Endothelial cell of umbilical vein (primary cell): ENCODE measurements at regions of chr6 and their contacts with region 1.

Region 1: GRCh38 chr6:20401205-20402091 is at the start of gene E2F3:
- DNase-seq: peak; percentile 100
- H3K4me3 ChIP-seq: peak within 1 kb of the TSS; percentile 69 to 78 (median 72)
- H3K27ac ChIP-seq: peak within 1 kb of the TSS; percentile 56
- H3K4me1 ChIP-seq: peaks cover 7% of the 10 kb centered on the region
- H3K27me3 ChIP-seq: no peaks in the 10 kb centered on the region
- CTCF ChIP-seq: no peak
- POLR2A ChIP-seq: peak; percentile 52
- total RNA-seq, gene E2F3: 21.2 and 22.0 TPM in 2 replicates

Region 2: DNA sequence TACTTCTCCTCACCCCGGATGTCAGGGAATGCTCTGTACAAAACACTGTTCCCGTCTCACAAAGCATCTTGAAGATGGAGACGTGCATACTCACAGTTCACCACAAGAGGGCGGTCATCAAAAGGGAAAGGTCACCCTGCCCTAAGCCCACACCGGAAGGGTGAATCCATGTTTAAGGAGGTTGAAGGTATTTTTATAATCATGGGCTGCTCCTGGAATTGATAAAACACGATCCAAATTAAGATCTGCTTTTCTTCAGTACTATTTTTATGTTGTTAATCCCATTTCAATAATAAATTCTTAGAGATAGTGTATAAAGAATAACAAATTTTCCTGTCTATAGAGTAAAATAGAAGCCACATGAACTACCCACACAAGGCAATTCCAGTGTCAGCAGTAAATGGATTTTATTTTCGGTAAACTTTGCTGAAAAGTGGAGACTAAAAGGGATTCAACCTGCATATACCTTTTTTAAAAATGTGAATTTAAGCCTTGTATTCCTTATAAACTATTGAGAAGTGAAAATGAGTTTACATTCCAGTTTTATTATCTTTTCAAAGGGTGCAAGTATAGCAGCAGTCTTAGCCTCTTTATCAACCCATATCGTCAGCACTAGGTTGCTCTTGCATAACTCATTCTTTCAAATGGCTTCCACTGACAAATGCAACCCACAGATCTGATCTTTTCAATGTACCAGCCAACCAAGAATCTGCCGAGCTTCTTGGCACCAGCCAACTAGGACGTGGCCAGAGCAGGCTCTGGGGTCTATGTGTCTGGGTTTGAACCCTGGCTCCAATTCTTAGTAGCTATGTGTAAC is 109.5 kb before region 1 on chr6:
- CTCF ChIA-PET with region 1: interaction called, 16 read pairs
- POLR2A ChIA-PET with region 1: no interaction called
- dilution Hi-C with region 1: no loop called
- intact Hi-C with region 1: loop called (anchors 1 kb)
- DNase-seq: peak; percentile 78
- H3K4me3 ChIP-seq: no peak overlapping the region
- H3K27ac ChIP-seq: no peak overlapping the region
- H3K4me1 ChIP-seq: no peaks in the 10 kb centered on the region
- H3K27me3 ChIP-seq: peaks cover under 1 to 2% of the 10 kb centered on the region in 2 experiments
- CTCF ChIP-seq: peak; percentile 79 to 82
- POLR2A ChIP-seq: no peak

Region 3: DNA sequence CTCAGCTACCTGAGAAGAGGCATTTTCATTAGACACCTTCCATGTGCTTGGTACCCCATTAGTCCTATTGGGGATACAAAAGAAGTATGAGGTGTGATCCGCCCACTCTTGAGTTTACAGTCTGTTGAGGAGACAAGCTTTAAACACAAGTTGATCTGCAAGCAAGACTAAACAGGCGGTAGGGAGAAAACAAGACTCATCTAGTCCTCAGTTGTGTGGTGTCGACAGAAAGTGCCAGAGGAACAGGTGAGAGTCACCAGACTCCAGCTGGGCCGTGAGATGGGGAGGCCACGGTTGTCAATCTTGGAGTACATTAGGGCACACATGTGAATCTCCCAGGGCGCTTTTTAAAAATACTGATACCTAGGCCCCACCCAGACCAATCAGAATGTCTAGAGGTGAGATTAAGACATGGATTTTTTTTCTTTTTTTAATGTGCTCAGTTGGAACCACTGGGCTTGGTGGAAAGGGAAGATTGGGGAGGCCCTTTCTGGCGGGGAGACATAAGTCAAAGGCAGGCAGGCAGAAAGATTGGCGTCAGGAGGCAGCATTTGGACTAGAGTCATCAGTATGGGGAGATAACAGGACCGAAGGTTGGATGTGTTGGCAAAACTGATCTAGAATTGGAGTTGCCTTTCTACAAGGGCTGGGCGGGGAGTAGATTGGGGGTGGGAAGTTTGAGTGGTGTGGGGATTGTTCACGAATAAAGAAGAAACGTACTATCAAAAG is 10.7 kb after region 1 on chr6:
- CTCF ChIA-PET with region 1: interaction called, 16 read pairs
- POLR2A ChIA-PET with region 1: no interaction called
- dilution Hi-C with region 1: no loop called
- intact Hi-C with region 1: no loop called
- DNase-seq: no peak
- H3K4me3 ChIP-seq: no peak overlapping the region
- H3K27ac ChIP-seq: no peak overlapping the region
- H3K4me1 ChIP-seq: peaks cover 21% of the 10 kb centered on the region
- H3K27me3 ChIP-seq: no peaks in the 10 kb centered on the region
- CTCF ChIP-seq: no peak
- POLR2A ChIP-seq: no peak

Region 4: DNA sequence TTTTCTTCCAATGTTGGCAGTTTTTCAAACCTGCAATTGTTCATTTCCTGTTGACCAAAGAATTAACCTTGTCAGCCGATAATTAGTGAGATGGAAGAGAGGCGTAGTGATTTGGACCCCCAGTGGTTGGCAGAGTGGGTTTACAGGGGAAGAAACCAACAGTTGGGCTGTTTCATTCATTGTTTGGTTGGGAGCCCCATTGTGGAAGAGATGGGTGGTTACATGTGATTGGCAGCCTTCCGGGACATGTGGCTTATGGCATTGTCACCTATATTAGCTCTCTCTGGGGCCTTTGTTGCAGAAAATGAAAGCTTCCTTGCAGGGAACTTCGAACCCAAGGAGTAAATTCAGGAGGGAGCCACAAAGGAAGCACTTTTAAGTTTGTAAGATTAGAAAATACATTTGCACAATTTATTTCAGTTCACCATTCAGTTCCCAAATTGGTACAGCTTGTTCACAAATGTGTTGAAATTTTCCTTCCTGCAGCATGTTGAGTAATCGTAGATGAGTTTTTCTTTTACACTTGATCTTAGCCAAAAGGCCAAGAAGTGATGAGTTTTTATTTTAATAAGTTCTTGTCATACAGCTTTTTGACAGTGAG is 82.5 kb after region 1 on chr6:
- CTCF ChIA-PET with region 1: interaction called, 5 read pairs
- POLR2A ChIA-PET with region 1: no interaction called
- dilution Hi-C with region 1: no loop called
- intact Hi-C with region 1: loop called (anchors 5 kb)
- DNase-seq: no peak
- H3K4me3 ChIP-seq: no peak overlapping the region
- H3K27ac ChIP-seq: no peak overlapping the region
- H3K4me1 ChIP-seq: peaks cover 4% of the 10 kb centered on the region
- H3K27me3 ChIP-seq: no peaks in the 10 kb centered on the region
- CTCF ChIP-seq: no peak
- POLR2A ChIP-seq: no peak

Region 5: GRCh38 chr6:20811109-20811746 is 409.8 kb after region 1 on chr6:
- CTCF ChIA-PET with region 1: no interaction called
- POLR2A ChIA-PET with region 1: no interaction called
- dilution Hi-C with region 1: no loop called
- intact Hi-C with region 1: loop called (anchors 5 kb)
- DNase-seq: peak; percentile 95
- H3K4me3 ChIP-seq: no peak overlapping the region
- H3K27ac ChIP-seq: peak overlapping the region; percentile 95
- H3K4me1 ChIP-seq: peaks cover 12% of the 10 kb centered on the region
- H3K27me3 ChIP-seq: no peaks in the 10 kb centered on the region
- CTCF ChIP-seq: no peak
- POLR2A ChIP-seq: no peak